ENCODE measurements at regions of chr4 and their contacts with region 1.

Region 1: DNA sequence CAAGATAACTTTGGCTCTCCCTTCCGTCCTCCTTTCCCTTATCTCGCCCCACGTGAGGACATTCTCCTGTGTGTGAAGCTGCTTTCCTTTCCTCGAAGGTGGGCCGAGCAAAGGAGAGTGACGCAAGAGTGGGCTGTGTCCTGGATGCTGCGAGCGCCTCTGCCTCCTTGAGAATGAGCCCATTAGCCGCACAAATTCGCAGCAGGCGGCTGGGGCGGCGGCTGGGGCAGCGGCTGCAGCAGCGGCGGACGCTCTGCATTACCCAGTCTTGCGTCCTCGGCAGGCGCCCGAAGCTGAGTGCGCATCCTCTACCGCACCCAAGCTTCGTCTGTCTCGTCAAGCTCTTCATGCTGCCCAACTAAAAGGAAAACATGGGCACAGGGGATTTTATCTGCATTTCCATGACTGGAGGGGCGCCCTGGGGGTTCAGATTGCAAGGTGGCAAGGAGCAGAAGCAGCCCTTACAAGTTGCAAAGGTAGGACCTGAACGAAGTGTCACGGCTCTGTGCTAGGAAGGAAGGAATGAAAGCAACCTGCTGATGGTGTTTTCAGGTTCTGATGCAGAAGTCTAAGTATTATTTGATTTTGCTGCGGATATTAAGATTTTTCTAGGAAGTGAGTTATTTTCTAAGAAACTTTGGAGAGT is at the start of gene SYNPO2:
- DNase-seq: peak; percentile 55
- H3K4me3 ChIP-seq: peak within 1 kb of the TSS; percentile 28
- H3K27ac ChIP-seq: peak within 1 kb of the TSS; percentile 12
- H3K4me1 ChIP-seq: no peaks in the 10 kb centered on the region
- H3K27me3 ChIP-seq: no peaks in the 10 kb centered on the region
- CTCF ChIP-seq: no peak
- total RNA-seq, gene SYNPO2: 9.5 to 266 TPM

Region 2: GRCh38 chr4:118772081-118772766 is 116.6 kb before region 1 on chr4:
- intact Hi-C with region 1: loop called (anchors 5 kb)
- DNase-seq: no peak
- H3K4me3 ChIP-seq: no peak overlapping the region
- H3K27ac ChIP-seq: no peak overlapping the region
- H3K4me1 ChIP-seq: no peaks in the 10 kb centered on the region
- H3K27me3 ChIP-seq: no peaks in the 10 kb centered on the region
- CTCF ChIP-seq: peak; percentile 42

Region 3: DNA sequence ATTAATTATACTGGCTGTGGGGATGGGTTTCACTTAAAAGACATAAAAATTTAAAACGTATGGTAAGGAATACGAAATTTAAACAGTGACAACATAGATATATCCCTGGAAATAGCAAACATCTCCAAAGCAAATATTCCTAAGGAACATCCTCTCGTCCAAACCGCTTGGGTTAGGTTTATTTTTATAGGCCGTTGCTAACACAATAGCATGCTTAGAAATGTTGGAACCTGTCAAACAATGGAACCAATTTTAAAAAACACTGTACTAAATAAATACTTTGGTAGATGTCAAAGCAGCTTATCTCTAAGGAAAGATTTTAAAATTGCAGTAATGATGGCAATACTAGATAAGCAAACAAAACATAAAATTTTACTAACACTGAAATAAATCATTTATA is 98.2 kb before region 1 on chr4:
- intact Hi-C with region 1: no loop called
- DNase-seq: no peak
- H3K4me3 ChIP-seq: no peak overlapping the region
- H3K27ac ChIP-seq: no peak overlapping the region
- H3K4me1 ChIP-seq: no peaks in the 10 kb centered on the region
- H3K27me3 ChIP-seq: no peaks in the 10 kb centered on the region
- CTCF ChIP-seq: no peak

Measured in colonic mucosa (tissue), 4 donors.